ENCODE measurements at regions of chr17 and their contacts with region 1.

Region 1: GRCh38 chr17:12709063-12709462 is 43.4 kb downstream of the MYOCD start:
- DNase-seq: no peak
- ATAC-seq: no peak
- H3K4me3 ChIP-seq: no peak overlapping the region
- H3K4me3 Mint-ChIP-seq: no peak overlapping the region
- H3K27ac ChIP-seq: no peak overlapping the region
- H3K27ac Mint-ChIP-seq: no peak overlapping the region
- H3K4me1 ChIP-seq: no peaks in the 10 kb centered on the region
- H3K4me1 Mint-ChIP-seq: no peaks in the 10 kb centered on the region
- H3K27me3 ChIP-seq: no peaks in the 10 kb centered on the region
- H3K27me3 Mint-ChIP-seq: peaks cover 2% of the 10 kb centered on the region
- CTCF ChIP-seq: no peak

Region 2: GRCh38 chr17:12722282-12722681 is 13.2 kb after region 1 on chr17:
- CTCF ChIA-PET with region 1: no interaction called
- POLR2A ChIA-PET with region 1: interaction called, 7 read pairs
- intact Hi-C with region 1: loop called in 1 of 2 experiments (anchors 2 kb)
- DNase-seq: no peak
- ATAC-seq: no peak
- H3K4me3 ChIP-seq: no peak overlapping the region
- H3K4me3 Mint-ChIP-seq: no peak overlapping the region
- H3K27ac ChIP-seq: no peak overlapping the region
- H3K27ac Mint-ChIP-seq: no peak overlapping the region
- H3K4me1 ChIP-seq: no peaks in the 10 kb centered on the region
- H3K4me1 Mint-ChIP-seq: no peaks in the 10 kb centered on the region
- H3K27me3 ChIP-seq: no peaks in the 10 kb centered on the region
- H3K27me3 Mint-ChIP-seq: peaks cover 3% of the 10 kb centered on the region
- CTCF ChIP-seq: no peak